Naive thymus-derived CD4-positive, alpha-beta T cell (primary cell): ENCODE measurements at regions of chr7 and their contacts with region 1.

Region 1: GRCh38 chr7:157432957-157433576 is 96.3 kb downstream of the DNAJB6 start:
- DNase-seq: peak; percentile 36 to 72 (median 61)
- ATAC-seq: peak; percentile 78
- H3K4me3 ChIP-seq: peak overlapping the region; percentile 22
- H3K4me3 Mint-ChIP-seq: peak overlapping the region; percentile 7 to 79 (median 59)
- H3K27ac ChIP-seq: no peak overlapping the region
- H3K27ac Mint-ChIP-seq: peak overlapping the region in 5 of 9 donors; percentile 10 to 58 (median 48)
- H3K4me1 ChIP-seq: peaks cover 0 to 12% of the 10 kb centered on the region in 2 donors
- H3K4me1 Mint-ChIP-seq: peaks cover 11 to 22% (median 16%) of the 10 kb centered on the region in 7 donors
- H3K27me3 ChIP-seq: no peaks in the 10 kb centered on the region
- H3K27me3 Mint-ChIP-seq: peaks cover 0 to 9% (median 0%) of the 10 kb centered on the region in 5 donors

Region 2: DNA sequence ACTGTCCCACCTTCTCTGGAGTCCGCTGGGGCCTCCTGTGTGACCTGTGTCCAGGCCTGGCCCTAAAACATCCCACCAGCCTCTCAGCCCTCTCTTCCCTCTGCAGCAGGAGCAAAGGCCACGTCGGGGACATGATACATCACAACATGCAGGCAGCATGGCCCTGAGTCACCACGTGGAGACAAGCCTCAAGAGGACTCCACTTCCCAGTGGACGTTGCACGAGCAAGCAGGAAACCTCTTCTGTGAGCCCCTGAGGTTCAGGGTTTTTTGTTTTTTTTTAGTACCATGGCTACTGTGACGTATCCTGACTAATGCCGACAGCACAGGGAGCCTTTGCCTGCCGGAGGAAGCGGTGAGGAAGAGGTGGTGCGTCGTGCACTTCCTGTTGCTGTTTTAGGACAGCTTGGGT is 69.6 kb after region 1 on chr7:
- CTCF ChIA-PET with region 1: no interaction called
- POLR2A ChIA-PET with region 1: no interaction called
- intact Hi-C with region 1: loop called (anchors 5 kb)
- DNase-seq: peak; percentile 33 to 94 (median 92)
- ATAC-seq: peak; percentile 98
- H3K4me3 ChIP-seq: peak overlapping the region; percentile 26
- H3K4me3 Mint-ChIP-seq: peak overlapping the region; percentile 77 to 93 (median 87)
- H3K27ac ChIP-seq: peak overlapping the region; percentile 68
- H3K27ac Mint-ChIP-seq: peak overlapping the region; percentile 86 to 100 (median 96)
- H3K4me1 ChIP-seq: peaks cover 20 to 22% of the 10 kb centered on the region in 2 donors
- H3K4me1 Mint-ChIP-seq: peaks cover 20 to 37% (median 34%) of the 10 kb centered on the region in 7 donors
- H3K27me3 ChIP-seq: no peaks in the 10 kb centered on the region
- H3K27me3 Mint-ChIP-seq: peaks cover 0 to 22% (median 7%) of the 10 kb centered on the region in 5 donors

Region 3: DNA sequence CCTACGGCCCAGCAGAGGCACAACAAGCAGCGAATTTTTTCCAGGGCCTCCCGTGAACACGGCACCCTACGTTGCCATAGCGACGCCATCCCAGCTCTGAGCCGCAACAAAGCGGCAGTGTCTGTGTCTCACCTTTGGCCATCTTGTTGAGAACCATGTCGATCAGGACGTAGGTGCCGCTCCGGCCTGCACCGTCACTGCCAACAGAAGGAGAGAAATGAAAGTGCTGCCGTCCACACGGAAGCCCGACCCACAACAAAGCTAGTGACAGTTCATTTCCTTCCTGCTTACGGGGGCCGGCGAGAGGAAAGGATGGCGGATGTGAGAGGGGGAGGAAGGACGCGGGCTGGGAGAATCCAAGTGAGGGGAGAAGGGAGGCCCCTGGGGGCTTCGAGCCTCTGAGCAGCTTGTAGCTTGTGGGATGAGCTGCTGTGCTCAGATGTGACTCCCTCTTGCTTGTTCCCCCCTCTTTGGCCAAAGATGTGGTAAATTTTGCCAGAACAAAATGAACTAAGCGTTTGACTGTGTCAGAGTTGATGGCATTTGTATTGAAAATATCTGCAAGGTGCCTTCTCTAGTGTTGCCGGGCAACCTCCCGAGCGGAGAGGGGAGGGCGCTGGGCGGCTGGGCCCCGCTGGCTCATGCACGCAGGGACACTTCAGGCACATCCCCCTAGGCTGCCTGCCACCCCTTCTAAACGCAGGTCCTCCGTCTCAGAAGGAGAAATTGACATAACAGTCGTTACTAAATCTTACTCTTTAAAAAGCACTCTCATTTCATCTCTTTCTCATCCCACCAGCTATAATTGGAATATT is 135.9 kb after region 1 on chr7:
- CTCF ChIA-PET with region 1: interaction called, 3 read pairs
- POLR2A ChIA-PET with region 1: no interaction called
- intact Hi-C with region 1: loop called in 1 of 2 experiments (anchors 1 kb)
- DNase-seq: peak; percentile 36 to 73 (median 64)
- ATAC-seq: peak; percentile 84
- H3K4me3 ChIP-seq: peak overlapping the region; percentile 54
- H3K4me3 Mint-ChIP-seq: peak overlapping the region; percentile 87 to 98 (median 92)
- H3K27ac ChIP-seq: no peak overlapping the region
- H3K27ac Mint-ChIP-seq: peak overlapping the region; percentile 63 to 95 (median 82)
- H3K4me1 ChIP-seq: peaks cover 11 to 15% of the 10 kb centered on the region in 2 donors
- H3K4me1 Mint-ChIP-seq: peaks cover 12 to 33% (median 24%) of the 10 kb centered on the region in 7 donors
- H3K27me3 ChIP-seq: no peaks in the 10 kb centered on the region
- H3K27me3 Mint-ChIP-seq: peaks cover 0 to 6% (median 0%) of the 10 kb centered on the region in 5 donors

Region 4: GRCh38 chr7:157612664-157613561 is 179.8 kb after region 1 on chr7:
- CTCF ChIA-PET with region 1: interaction called, 3 read pairs
- POLR2A ChIA-PET with region 1: no interaction called
- intact Hi-C with region 1: loop called (anchors 1 to 2 kb)
- DNase-seq: peak; percentile 50 to 86 (median 79)
- ATAC-seq: peak; percentile 88
- H3K4me3 ChIP-seq: peak overlapping the region; percentile 79
- H3K4me3 Mint-ChIP-seq: peak overlapping the region; percentile 76 to 93 (median 86)
- H3K27ac ChIP-seq: peak overlapping the region; percentile 63
- H3K27ac Mint-ChIP-seq: peak overlapping the region; percentile 80 to 97 (median 88)
- H3K4me1 ChIP-seq: peaks cover 0 to 8% of the 10 kb centered on the region in 2 donors
- H3K4me1 Mint-ChIP-seq: peaks cover 8 to 37% (median 23%) of the 10 kb centered on the region in 7 donors
- H3K27me3 ChIP-seq: no peaks in the 10 kb centered on the region
- H3K27me3 Mint-ChIP-seq: peaks cover 0 to 4% (median 0%) of the 10 kb centered on the region in 5 donors

Region 5: DNA sequence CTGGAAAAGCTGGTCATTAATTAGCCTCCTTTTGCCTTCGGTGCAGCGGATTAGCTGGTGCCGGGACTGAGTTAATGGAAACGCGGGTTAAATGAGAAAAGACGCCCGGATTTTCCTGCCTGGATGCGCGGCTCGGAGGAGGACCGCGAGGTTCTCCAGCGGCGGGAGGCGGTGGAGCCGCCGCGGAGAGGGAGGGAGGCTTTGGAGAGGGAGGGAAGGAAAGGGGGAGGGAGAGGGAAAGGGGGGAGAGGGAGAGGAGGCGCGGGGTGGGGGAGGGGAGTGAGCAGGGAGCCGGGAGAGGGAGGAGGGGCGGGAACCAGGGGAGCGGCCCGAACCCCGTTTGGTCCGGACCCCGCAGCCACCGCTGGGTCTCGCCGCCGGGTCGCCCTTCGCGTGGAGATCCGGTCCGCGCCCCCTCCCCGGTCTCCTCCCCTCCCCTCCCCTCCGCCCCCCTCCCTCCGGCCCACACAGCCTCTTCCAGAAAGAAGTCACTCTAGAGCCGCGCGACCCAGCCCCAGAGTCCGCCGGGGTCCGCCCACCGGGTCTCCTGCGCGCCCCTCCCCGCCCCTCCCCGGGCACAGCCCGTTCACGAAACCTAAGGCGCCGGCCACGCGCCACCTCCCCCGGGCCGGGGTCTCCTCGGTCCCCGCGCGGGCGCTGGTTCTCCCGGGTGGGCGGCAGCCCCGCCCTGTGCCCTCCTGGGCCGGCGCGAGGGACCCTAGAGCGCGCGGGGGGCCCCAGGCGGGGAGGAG is 251.3 kb after region 1 on chr7:
- CTCF ChIA-PET with region 1: no interaction called
- POLR2A ChIA-PET with region 1: no interaction called
- intact Hi-C with region 1: loop called (anchors 2 to 10 kb)
- DNase-seq: no peak
- ATAC-seq: no peak
- H3K4me3 ChIP-seq: no peak overlapping the region
- H3K4me3 Mint-ChIP-seq: peak overlapping the region; percentile 20 to 79 (median 64)
- H3K27ac ChIP-seq: no peak overlapping the region
- H3K27ac Mint-ChIP-seq: no peak overlapping the region
- H3K4me1 ChIP-seq: peaks cover 0 to 32% of the 10 kb centered on the region in 2 donors
- H3K4me1 Mint-ChIP-seq: peaks cover 2 to 44% (median 38%) of the 10 kb centered on the region in 7 donors
- H3K27me3 ChIP-seq: peaks cover 16 to 52% of the 10 kb centered on the region in 2 donors
- H3K27me3 Mint-ChIP-seq: peaks cover 71 to 79% (median 73%) of the 10 kb centered on the region in 5 donors

Region 6: GRCh38 chr7:157760004-157760730 is 327.1 kb after region 1 on chr7:
- CTCF ChIA-PET with region 1: no interaction called
- POLR2A ChIA-PET with region 1: no interaction called
- intact Hi-C with region 1: loop called in 1 of 2 experiments (anchors 2 kb)
- DNase-seq: peak in 4 of 9 donors; percentile 11 to 26 (median 21)
- ATAC-seq: peak; percentile 27
- H3K4me3 ChIP-seq: no peak overlapping the region
- H3K4me3 Mint-ChIP-seq: no peak overlapping the region
- H3K27ac ChIP-seq: no peak overlapping the region
- H3K27ac Mint-ChIP-seq: peak overlapping the region in 1 of 9 donors; percentile 62
- H3K4me1 ChIP-seq: no peaks in the 10 kb centered on the region
- H3K4me1 Mint-ChIP-seq: peaks cover 0 to 9% (median 7%) of the 10 kb centered on the region in 7 donors
- H3K27me3 ChIP-seq: no peaks in the 10 kb centered on the region
- H3K27me3 Mint-ChIP-seq: peaks cover 0 to 7% (median 0%) of the 10 kb centered on the region in 5 donors